Activated B cell treated with CpG ODN at 0.5 μM for 24 hours (primary cell): ENCODE measurements at regions of chr19 and their contacts with region 1.

Region 1: DNA sequence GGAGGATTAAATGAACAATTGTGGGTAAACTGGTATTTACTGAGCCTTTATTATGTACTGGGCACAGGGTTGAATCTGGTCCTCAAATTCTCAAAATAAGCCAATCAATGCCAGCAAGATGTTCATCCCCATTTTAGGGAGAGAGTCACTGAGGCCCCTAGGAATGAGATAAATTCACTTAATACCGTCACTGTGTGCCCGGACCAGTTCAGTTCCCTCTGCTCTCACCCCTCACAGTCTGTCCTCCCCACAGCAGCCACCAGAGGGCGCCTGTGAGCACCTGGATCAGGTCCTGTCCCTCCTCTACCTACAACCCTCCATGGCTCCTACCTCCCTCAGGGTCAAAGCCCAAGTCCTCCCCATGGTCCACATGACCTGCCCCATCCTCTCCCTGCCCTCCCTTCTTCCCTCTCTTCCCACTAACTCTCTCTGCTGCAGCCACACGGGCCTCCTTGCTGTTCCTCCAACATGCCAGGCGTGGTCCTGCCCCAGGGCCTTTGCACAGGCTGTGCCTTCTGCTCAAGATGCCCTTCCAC is 42.0 kb upstream of the NFIC start:
- DNase-seq: peak; percentile 58
- ATAC-seq: peak; percentile 61
- H3K4me3 Mint-ChIP-seq: no peak overlapping the region
- H3K27ac Mint-ChIP-seq: no peak overlapping the region
- H3K4me1 Mint-ChIP-seq: no peaks in the 10 kb centered on the region
- H3K27me3 Mint-ChIP-seq: peaks cover 17% of the 10 kb centered on the region
- CTCF ChIP-seq: no peak

Region 2: DNA sequence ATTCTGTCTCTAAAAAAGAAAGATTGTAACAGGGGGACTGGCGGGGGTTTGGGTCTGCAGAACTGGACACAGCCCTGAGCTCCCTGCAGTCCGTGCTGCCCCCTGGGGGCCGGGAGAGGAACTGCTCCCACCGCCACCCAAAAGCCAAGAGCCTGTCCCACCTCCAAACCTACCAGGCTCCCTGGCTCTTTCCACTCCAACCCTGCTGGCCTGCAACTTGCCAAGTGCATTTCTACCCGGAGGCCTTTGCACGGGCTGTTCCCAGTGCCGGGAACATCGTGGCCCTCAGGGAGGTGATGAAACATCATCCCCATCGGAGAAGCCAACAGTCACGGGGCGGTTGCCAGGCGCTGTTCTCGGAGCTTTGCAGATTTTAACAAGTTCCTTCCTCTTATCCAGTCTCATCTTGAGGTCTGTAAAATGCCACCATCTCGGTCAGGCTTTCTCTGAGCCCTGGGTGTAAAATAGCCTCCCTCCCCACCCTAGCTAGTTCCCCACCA is 105.2 kb after region 1 on chr19:
- CTCF ChIA-PET with region 1: interaction called, 82 read pairs
- POLR2A ChIA-PET with region 1: no interaction called
- intact Hi-C with region 1: loop called (anchors 1 kb)
- DNase-seq: peak; percentile 81
- ATAC-seq: peak; percentile 87
- H3K4me3 Mint-ChIP-seq: no peak overlapping the region
- H3K27ac Mint-ChIP-seq: no peak overlapping the region
- H3K4me1 Mint-ChIP-seq: peaks cover 20% of the 10 kb centered on the region
- H3K27me3 Mint-ChIP-seq: no peaks in the 10 kb centered on the region
- CTCF ChIP-seq: peak; percentile 63

Region 3: DNA sequence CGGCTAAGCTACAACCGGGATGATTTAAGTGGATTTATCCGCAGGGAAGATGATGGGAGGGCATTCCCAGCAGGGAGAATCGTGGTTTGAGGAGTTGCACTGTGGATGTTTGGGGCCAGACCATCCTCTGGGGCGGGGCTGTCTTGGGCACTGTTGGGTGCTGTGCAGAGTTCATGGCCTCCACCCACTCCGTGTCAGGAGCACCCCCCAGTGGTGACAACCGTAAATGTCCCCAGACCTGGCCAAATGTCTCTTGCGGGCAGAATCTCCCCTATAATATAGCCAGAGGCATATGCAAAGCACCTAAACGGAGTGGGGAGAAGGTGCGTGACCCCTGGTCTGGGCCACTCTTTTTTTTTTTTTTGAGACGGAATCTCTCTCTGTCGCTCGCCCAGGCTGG is 115.7 kb after region 1 on chr19:
- CTCF ChIA-PET with region 1: interaction called, 3 read pairs
- POLR2A ChIA-PET with region 1: no interaction called
- intact Hi-C with region 1: loop called (anchors 1 kb)
- DNase-seq: peak; percentile 45
- ATAC-seq: peak; percentile 41
- H3K4me3 Mint-ChIP-seq: no peak overlapping the region
- H3K27ac Mint-ChIP-seq: no peak overlapping the region
- H3K4me1 Mint-ChIP-seq: peaks cover 16% of the 10 kb centered on the region
- H3K27me3 Mint-ChIP-seq: no peaks in the 10 kb centered on the region
- CTCF ChIP-seq: no peak

Region 4: GRCh38 chr19:3471954-3472655 is 147.7 kb after region 1 on chr19:
- CTCF ChIA-PET with region 1: interaction called, 5 read pairs
- POLR2A ChIA-PET with region 1: no interaction called
- intact Hi-C with region 1: loop called (anchors 1 kb)
- DNase-seq: no peak
- ATAC-seq: no peak
- H3K4me3 Mint-ChIP-seq: no peak overlapping the region
- H3K27ac Mint-ChIP-seq: no peak overlapping the region
- H3K4me1 Mint-ChIP-seq: no peaks in the 10 kb centered on the region
- H3K27me3 Mint-ChIP-seq: no peaks in the 10 kb centered on the region
- CTCF ChIP-seq: no peak

Region 5: GRCh38 chr19:3710265-3710812 is 385.9 kb after region 1 on chr19:
- CTCF ChIA-PET with region 1: no interaction called
- POLR2A ChIA-PET with region 1: no interaction called
- intact Hi-C with region 1: loop called (anchors 5 kb)
- DNase-seq: no peak
- ATAC-seq: no peak
- H3K4me3 Mint-ChIP-seq: no peak overlapping the region
- H3K27ac Mint-ChIP-seq: no peak overlapping the region
- H3K4me1 Mint-ChIP-seq: peaks cover 6% of the 10 kb centered on the region
- H3K27me3 Mint-ChIP-seq: peaks cover 8% of the 10 kb centered on the region
- CTCF ChIP-seq: no peak